ENCODE measurements at regions of chr12 and their contacts with region 1.

Region 1: GRCh38 chr12:39095636-39096330 is 190.4 kb upstream of the CPNE8 start:
- DNase-seq: no peak
- ATAC-seq: no peak
- H3K4me3 ChIP-seq: no peak overlapping the region
- H3K27ac ChIP-seq: no peak overlapping the region
- H3K4me1 ChIP-seq: no peaks in the 10 kb centered on the region
- H3K27me3 ChIP-seq: no peaks in the 10 kb centered on the region
- CTCF ChIP-seq: no peak
- POLR2A ChIP-seq: no peak
- RAD21 ChIP-seq: no peak

Region 2: GRCh38 chr12:38289396-38289795 is 806.4 kb before region 1 on chr12:
- CTCF ChIA-PET with region 1: no interaction called
- POLR2A ChIA-PET with region 1: no interaction called
- RAD21 ChIA-PET with region 1: no interaction called
- intact Hi-C with region 1: no loop called
- DNase-seq: no peak
- ATAC-seq: no peak
- H3K4me3 ChIP-seq: no peak overlapping the region
- H3K27ac ChIP-seq: no peak overlapping the region
- H3K4me1 ChIP-seq: no peaks in the 10 kb centered on the region
- H3K27me3 ChIP-seq: no peaks in the 10 kb centered on the region
- CTCF ChIP-seq: no peak
- POLR2A ChIP-seq: no peak
- RAD21 ChIP-seq: no peak

Region 3: GRCh38 chr12:38921025-38921677 is 174.6 kb before region 1 on chr12:
- CTCF ChIA-PET with region 1: interaction called, 11 read pairs
- POLR2A ChIA-PET with region 1: no interaction called
- RAD21 ChIA-PET with region 1: no interaction called
- intact Hi-C with region 1: no loop called
- DNase-seq: peak; percentile 69
- ATAC-seq: peak; percentile 90
- H3K4me3 ChIP-seq: no peak overlapping the region
- H3K27ac ChIP-seq: no peak overlapping the region
- H3K4me1 ChIP-seq: no peaks in the 10 kb centered on the region
- H3K27me3 ChIP-seq: no peaks in the 10 kb centered on the region
- CTCF ChIP-seq: peak; percentile 64 to 80 (median 70); a peak in 5 of 6 replicates
- POLR2A ChIP-seq: no peak
- RAD21 ChIP-seq: peak; percentile 76

Region 4: GRCh38 chr12:39112064-39112463 is 16.3 kb after region 1 on chr12:
- CTCF ChIA-PET with region 1: no interaction called
- POLR2A ChIA-PET with region 1: no interaction called
- RAD21 ChIA-PET with region 1: no interaction called
- intact Hi-C with region 1: no loop called
- DNase-seq: no peak
- ATAC-seq: no peak
- H3K4me3 ChIP-seq: no peak overlapping the region
- H3K27ac ChIP-seq: no peak overlapping the region
- H3K4me1 ChIP-seq: no peaks in the 10 kb centered on the region
- H3K27me3 ChIP-seq: no peaks in the 10 kb centered on the region
- CTCF ChIP-seq: no peak
- POLR2A ChIP-seq: no peak
- RAD21 ChIP-seq: no peak

Region 5: GRCh38 chr12:40597133-40597532 is 1501.3 kb after region 1 on chr12:
- CTCF ChIA-PET with region 1: no interaction called
- POLR2A ChIA-PET with region 1: no interaction called
- RAD21 ChIA-PET with region 1: no interaction called
- intact Hi-C with region 1: no loop called
- DNase-seq: no peak
- ATAC-seq: no peak
- H3K4me3 ChIP-seq: no peak overlapping the region
- H3K27ac ChIP-seq: no peak overlapping the region
- H3K4me1 ChIP-seq: no peaks in the 10 kb centered on the region
- H3K27me3 ChIP-seq: no peaks in the 10 kb centered on the region
- CTCF ChIP-seq: no peak
- POLR2A ChIP-seq: no peak
- RAD21 ChIP-seq: no peak